Lower leg skin (tissue), 4 donors: ENCODE measurements at regions of chr12 and their contacts with region 1.

Region 1: DNA sequence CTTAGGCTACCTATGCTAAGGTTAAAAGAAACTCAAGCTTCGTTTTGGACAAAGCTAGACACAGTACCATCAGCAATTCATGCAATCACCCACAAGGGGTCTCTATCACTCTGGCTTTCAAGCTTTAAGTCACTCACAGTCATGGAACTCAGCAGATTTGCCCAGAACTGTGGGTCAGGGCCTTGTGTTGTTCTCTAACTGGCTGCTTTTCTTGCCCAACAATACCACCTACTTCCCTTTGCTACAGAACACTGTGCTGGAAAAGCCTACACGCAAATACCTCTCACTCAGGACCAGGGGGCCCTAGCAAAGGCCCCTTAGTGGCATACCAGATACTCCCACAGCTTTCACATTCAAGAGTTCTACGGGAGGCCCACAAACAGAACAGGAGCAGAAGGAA is 9.1 kb downstream of the NEMP1 start:
- DNase-seq: peak in 1 of 2 donors; percentile 76
- H3K4me3 ChIP-seq: no peak overlapping the region
- CTCF ChIP-seq: peak in 2 of 3 donors; percentile 14 to 86
- POLR2A ChIP-seq: no peak

Region 2: DNA sequence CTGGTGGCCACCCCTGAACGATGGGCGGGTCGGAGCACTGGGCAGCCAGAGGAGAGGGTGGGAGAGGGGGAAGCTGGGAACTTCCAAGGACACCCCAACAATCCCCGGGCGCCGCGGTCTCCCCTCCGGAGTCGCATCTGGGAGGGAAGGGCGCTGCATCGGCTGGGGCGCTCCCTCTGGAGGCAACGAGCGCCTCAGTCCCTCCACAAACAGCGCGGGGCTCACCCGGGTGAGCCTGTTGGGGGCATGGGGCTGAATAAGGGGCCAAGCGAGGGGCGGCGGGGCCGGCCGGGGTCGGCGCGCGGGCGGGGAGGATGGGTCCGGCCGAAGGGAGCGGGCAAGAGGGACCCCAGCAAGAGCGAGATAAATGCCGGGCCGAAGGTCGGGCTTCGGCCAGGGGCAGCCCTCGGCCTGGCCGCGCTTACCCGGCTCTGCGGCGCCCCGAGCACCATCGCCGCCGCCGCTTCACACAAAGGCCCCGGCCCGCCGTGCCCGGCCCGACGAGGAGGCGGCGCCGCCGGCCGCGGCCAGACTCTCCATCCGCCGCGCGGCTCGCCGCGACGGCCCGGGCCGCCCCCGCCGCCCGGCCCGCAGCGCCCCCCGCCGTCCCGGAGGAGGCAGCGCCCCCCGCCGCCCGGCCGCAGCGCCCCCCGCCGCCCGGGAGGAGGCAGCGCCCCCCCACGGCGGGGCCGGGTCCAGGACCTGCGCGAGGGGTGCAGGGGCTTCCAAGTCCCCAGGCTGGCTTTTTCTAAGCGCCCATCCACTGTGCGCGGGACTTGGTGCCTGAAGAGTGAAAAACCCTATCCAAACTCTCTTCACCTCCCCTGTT is 63.3 kb before region 1 on chr12 and contains the start of gene ZBTB39:
- intact Hi-C with region 1: loop called (anchors 5 kb)
- DNase-seq: no peak
- H3K4me3 ChIP-seq: peak within 1 kb of the TSS; percentile 86
- CTCF ChIP-seq: no peak
- POLR2A ChIP-seq: no peak
- total RNA-seq, gene ZBTB39: 5.2 to 6.1 (median 6.1) TPM

Region 3: GRCh38 chr12:57111031-57111734 is 41.7 kb after region 1 on chr12 and contains the start of gene STAT6:
- intact Hi-C with region 1: loop called (anchors 5 kb)
- DNase-seq: peak; percentile 91 to 96
- H3K4me3 ChIP-seq: peak within 1 kb of the TSS; percentile 64
- CTCF ChIP-seq: no peak
- POLR2A ChIP-seq: peak in 1 of 2 donors; percentile 50
- total RNA-seq, gene STAT6: 105 to 210 (median 129) TPM

Region 4: GRCh38 chr12:57182921-57183790 is 113.6 kb after region 1 on chr12:
- intact Hi-C with region 1: loop called (anchors 2 kb)
- DNase-seq: peak; percentile 74 to 96
- H3K4me3 ChIP-seq: no peak overlapping the region
- CTCF ChIP-seq: peak in 1 of 3 donors; percentile 94
- POLR2A ChIP-seq: no peak